ENCODE measurements at regions of chr6 and their contacts with region 1.

Region 1: DNA sequence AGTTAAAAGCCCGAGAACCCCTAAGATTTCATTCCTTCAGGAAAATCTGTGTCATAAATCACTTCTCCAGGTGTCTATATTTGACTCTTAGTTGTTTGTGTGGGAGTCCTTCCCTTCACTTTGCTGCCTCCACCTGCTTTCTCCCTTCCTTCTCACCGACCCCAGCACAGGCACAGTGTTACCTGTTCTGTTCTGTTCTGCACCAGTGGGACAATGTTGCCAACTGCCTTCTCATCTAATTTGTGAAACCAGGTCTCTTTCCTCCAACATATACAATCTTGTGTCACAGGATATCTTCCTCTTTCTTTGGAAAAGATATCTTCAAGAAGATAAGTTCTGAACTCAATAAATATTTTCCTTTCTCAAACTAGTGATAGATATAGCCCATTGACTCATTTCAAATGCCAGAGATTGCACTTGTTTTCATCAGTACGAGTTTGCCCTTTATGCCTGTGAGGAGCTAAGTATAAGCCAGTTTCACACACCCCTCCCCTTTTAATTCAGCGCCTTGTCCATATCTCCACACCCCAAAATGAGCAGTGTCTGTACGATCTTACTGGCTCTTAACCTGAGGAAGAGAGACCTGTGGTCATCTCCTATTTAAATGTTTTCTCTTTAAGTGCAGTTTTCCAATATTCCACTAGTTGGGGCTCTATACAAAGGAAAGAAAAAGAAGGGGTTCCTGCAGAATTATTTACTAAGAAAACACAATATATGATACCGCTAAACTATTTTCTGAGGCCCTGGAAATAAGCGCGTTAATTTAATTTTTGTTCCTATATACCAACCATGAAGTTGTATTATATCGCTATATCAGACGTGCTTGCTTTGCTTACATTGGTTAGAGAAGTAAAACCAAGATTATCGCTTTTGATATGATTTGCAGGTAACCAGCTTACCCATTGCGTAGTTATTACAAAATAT is 81.6 kb upstream of the PREP start:
- DNase-seq: no peak
- H3K4me3 Mint-ChIP-seq: no peak overlapping the region
- H3K27ac Mint-ChIP-seq: no peak overlapping the region
- H3K4me1 Mint-ChIP-seq: peaks cover 32% of the 10 kb centered on the region
- H3K27me3 Mint-ChIP-seq: peaks cover 20% of the 10 kb centered on the region

Region 2: GRCh38 chr6:105431226-105431625 is 53.3 kb before region 1 on chr6:
- CTCF ChIA-PET with region 1: interaction called, 10 read pairs
- DNase-seq: no peak
- H3K4me3 Mint-ChIP-seq: no peak overlapping the region
- H3K27ac Mint-ChIP-seq: no peak overlapping the region
- H3K4me1 Mint-ChIP-seq: no peaks in the 10 kb centered on the region
- H3K27me3 Mint-ChIP-seq: peaks cover 9% of the 10 kb centered on the region

Measured in activated naive CD4-positive, alpha-beta T cell treated with anti-CD3 and anti-CD28 coated beads, Interleukin-2, amount 10 ng/mL, durations not matched to agents 7 days and 5 days (primary cell).